ENCODE measurements at regions of chrX and their contacts with region 1.

Region 1: DNA sequence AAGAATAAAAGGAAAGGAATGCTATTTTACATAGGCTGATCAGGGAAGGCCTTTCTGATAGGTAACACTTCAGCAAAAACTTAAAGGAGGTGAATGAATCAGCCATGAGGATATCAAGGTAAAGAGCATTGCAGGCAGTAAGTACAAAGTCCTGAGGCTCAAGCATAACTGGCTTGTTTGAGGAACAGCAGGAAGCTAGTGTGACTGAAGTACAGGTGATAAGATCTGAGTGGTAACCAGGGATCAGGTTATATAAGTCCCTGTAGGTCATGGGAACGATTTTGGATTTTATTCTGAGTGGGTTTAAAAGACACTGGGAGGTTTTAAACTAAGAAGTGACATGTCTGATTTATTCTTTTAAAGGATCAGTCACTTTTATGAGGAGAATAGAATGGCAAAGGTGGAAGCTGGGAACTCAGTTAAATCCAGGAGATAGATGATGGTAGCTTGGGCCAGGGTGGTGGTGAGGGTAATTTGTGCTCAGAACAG is 47.1 kb upstream of the THOC2 start:
- H3K4me3 ChIP-seq: no peak overlapping the region
- H3K27ac ChIP-seq: peak overlapping the region; percentile 55; the same call in 1 of the 2 replicates
- H3K4me1 ChIP-seq: peaks cover 4% of the 10 kb centered on the region; the same call in 1 of the 2 replicates
- CTCF ChIP-seq: no peak

Region 2: DNA sequence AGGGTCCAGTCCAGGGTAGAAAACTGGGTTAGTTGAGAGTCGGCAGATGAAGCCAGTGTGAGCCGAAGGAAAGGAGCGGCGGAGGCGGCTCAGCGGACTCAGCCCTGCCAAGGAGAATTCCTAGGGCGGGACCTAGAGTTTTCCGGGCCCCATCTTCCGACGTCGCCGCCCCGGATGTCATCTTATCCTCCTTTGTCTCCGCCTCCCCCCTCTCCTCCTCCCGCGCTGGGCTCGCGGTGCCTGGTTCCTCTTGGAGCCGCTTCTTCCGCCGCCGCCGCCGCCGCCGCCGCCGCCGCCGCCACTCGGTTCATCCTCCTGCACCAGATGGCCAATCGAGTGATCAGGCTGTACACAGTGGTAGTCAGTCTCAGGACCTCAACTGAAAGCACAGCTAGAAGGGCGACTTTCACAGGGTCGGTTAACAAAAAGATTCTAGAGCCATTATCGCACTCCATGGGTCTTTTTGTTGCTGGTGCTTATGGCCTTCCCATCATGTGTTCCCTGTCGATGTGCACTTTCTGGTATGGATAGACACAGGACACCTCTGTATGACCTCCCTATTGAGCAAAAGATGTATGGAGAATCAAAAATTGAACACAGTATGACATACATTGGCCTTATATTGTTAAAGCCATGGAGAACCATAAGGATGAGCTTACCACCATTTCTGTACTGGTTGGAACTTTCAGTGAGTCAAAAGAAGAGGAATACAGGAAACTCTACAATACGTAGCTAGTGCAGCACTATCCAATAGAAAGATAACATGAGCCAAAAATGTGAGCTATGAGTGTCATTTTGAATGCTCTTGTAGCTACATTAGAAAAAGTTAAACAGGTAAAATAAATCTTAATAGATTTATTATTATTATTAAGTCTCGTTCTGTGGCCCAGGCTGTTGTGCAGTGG is 14.7 kb before region 1 on chrX:
- CTCF ChIA-PET with region 1: interaction called, 16 read pairs
- POLR2A ChIA-PET with region 1: interaction called, 5 read pairs
- H3K4me3 ChIP-seq: peak overlapping the region; percentile 34
- H3K27ac ChIP-seq: peak overlapping the region; percentile 82
- H3K4me1 ChIP-seq: 0 out of 2 replicates have a peak, but pooled peaks cover 2% of the 10 kb centered on the region
- CTCF ChIP-seq: no peak

Region 3: GRCh38 chrX:123814343-123814905 is 34.5 kb after region 1 on chrX:
- CTCF ChIA-PET with region 1: no interaction called
- POLR2A ChIA-PET with region 1: no interaction called
- H3K4me3 ChIP-seq: no peak overlapping the region
- H3K27ac ChIP-seq: no peak overlapping the region
- H3K4me1 ChIP-seq: no peaks in the 10 kb centered on the region
- CTCF ChIP-seq: no peak

Measured in HEK293 (cell line).